ENCODE measurements at regions of chr12 and their contacts with region 1.

Region 1: DNA sequence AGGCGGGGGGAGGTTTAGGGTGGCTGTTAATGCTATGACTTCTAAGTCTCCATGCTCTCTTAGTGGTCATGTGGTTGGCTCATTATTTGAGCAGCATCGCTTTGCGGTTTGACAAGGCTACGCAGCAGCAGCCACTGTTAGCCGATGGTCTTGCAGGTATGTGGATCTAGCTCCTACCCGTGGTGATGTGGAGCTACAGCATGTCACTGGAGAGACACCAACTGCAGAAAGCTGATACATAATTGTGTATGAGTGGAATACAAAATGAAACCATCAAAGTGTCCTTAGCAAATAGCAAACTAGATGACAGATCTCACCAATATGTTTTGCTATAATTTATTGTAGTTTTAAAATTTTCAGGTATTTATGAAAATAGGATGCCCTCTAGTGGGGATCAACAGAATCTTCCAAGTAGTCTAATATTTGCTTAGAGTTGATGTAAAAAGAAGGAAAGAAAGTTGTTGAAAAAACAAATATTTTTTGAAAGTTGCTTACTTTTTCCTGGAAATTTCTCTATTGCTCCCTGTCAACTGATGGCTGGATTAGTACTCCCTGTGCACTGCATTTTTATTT is 94.9 kb downstream of the NAV3 start:
- DNase-seq: peak; percentile 66 to 95
- ATAC-seq: peak; percentile 100
- H3K4me3 ChIP-seq: no peak overlapping the region
- H3K27ac ChIP-seq: no peak overlapping the region
- H3K4me1 ChIP-seq: peaks cover 6% of the 10 kb centered on the region; the same call in 2 of the 3 replicates
- CTCF ChIP-seq: peak; percentile 100
- EP300 ChIP-seq: no peak
- POLR2A ChIP-seq: no peak
- RAD21 ChIP-seq: peak; percentile 94 to 98

Region 2: DNA sequence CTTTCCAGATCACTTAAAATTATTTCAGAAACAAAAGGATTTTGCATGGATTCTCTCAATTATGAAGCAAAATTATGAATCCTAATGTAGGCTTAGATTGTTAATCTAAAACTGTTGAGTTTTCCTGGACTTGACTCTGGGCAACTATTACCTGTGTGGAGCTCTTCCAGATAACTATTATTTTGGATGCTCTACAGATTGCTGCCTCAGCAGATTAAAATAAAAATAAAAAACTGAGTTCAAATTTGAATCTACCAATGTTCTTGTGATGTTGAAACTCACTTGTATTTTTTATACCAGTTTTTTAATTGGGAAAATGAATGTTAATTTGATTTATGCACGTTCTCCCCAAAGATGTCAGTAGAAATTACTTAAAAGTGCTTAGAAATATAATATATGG is 215.4 kb before region 1 on chr12:
- CTCF ChIA-PET with region 1: interaction called, 10 read pairs
- POLR2A ChIA-PET with region 1: no interaction called
- DNase-seq: no peak
- ATAC-seq: no peak
- H3K4me3 ChIP-seq: no peak overlapping the region
- H3K27ac ChIP-seq: no peak overlapping the region
- H3K4me1 ChIP-seq: no peaks in the 10 kb centered on the region
- CTCF ChIP-seq: no peak
- EP300 ChIP-seq: no peak
- POLR2A ChIP-seq: no peak
- RAD21 ChIP-seq: no peak

Region 3: GRCh38 chr12:77724367-77724957 is 201.2 kb before region 1 on chr12:
- CTCF ChIA-PET with region 1: interaction called, 16 read pairs
- POLR2A ChIA-PET with region 1: no interaction called
- DNase-seq: peak in 1 of 2 experiments; percentile 50
- ATAC-seq: peak; percentile 54 to 83; a peak in 3 of 6 replicates
- H3K4me3 ChIP-seq: no peak overlapping the region
- H3K27ac ChIP-seq: no peak overlapping the region
- H3K4me1 ChIP-seq: no peaks in the 10 kb centered on the region
- CTCF ChIP-seq: peak; percentile 79
- EP300 ChIP-seq: no peak
- POLR2A ChIP-seq: no peak
- RAD21 ChIP-seq: peak; percentile 86 to 87

Region 4: GRCh38 chr12:77907936-77908335 is 17.7 kb before region 1 on chr12:
- CTCF ChIA-PET with region 1: interaction called, 11 read pairs
- POLR2A ChIA-PET with region 1: no interaction called
- DNase-seq: no peak
- ATAC-seq: no peak
- H3K4me3 ChIP-seq: no peak overlapping the region
- H3K27ac ChIP-seq: no peak overlapping the region
- H3K4me1 ChIP-seq: no peaks in the 10 kb centered on the region
- CTCF ChIP-seq: no peak
- EP300 ChIP-seq: no peak
- POLR2A ChIP-seq: no peak
- RAD21 ChIP-seq: no peak

Region 5: GRCh38 chr12:77914081-77914488 is 11.5 kb before region 1 on chr12:
- CTCF ChIA-PET with region 1: interaction called, 11 read pairs
- POLR2A ChIA-PET with region 1: no interaction called
- DNase-seq: peak in 1 of 2 experiments; percentile 5
- ATAC-seq: no peak
- H3K4me3 ChIP-seq: no peak overlapping the region
- H3K27ac ChIP-seq: no peak overlapping the region
- H3K4me1 ChIP-seq: no peaks in the 10 kb centered on the region
- CTCF ChIP-seq: no peak
- EP300 ChIP-seq: no peak
- POLR2A ChIP-seq: no peak
- RAD21 ChIP-seq: peak in 1 of 2 experiments; percentile 14; a peak in 2 of 5 replicates

Measured in A549 (cell line).